B cell (primary cell): ENCODE measurements at regions of chr5 and their contacts with region 1.

Region 1: GRCh38 chr5:158695595-158696330 is 404.0 kb downstream of the EBF1 start:
- DNase-seq: peak; percentile 89
- ATAC-seq: peak; percentile 95
- H3K4me3 ChIP-seq: no peak overlapping the region
- H3K4me3 Mint-ChIP-seq: peak overlapping the region; percentile 35
- H3K27ac ChIP-seq: peak overlapping the region in 1 of 2 donors; percentile 53
- H3K27ac Mint-ChIP-seq: peak overlapping the region; percentile 28
- H3K4me1 ChIP-seq: peaks cover 17% of the 10 kb centered on the region in 2 donors
- H3K4me1 Mint-ChIP-seq: peaks cover 25% of the 10 kb centered on the region
- H3K27me3 ChIP-seq: no peaks in the 10 kb centered on the region
- H3K27me3 Mint-ChIP-seq: no peaks in the 10 kb centered on the region
- CTCF ChIP-seq: peak; percentile 99

Region 2: DNA sequence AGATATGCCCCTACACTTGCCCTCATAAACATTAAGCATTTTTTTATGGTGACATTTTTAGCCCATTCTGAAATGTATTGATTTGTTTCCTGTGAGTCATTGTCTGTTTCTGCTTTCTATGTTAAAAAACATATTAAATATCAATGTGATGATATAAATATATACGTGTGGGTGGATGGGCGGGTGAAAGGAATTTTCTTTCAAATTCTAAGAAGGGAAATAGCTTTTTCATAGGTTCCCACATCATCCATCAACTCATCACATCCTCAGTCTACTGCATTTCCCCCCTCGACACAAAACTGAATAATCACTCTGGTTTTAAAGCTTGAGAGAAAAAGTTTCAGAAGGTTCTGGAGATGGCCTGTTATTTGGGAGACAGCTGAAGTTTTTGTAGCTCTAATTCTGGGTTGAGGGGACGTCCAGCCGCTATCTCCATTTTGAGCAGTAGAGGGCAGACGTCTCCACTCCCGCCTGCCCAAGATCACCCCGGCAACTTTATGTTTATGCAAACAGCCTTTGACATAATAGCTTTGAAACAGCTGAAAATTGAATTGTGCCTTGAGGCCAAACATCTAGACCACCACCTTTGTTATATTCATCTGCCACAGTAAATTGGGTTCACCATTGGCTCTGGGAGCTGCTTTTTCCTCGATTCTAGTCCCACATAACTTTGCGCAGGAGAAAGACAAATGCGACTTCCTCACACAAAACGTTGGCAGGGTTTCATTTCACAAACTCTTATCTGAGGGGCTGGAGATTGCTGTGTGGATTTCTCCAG is 620.6 kb before region 1 on chr5:
- CTCF ChIA-PET with region 1: interaction called, 35 read pairs
- POLR2A ChIA-PET with region 1: no interaction called
- intact Hi-C with region 1: loop called (anchors 1 kb)
- DNase-seq: peak; percentile 78
- ATAC-seq: peak; percentile 90
- H3K4me3 ChIP-seq: peak overlapping the region in 2 of 5 experiments; percentile 10 to 20
- H3K4me3 Mint-ChIP-seq: peak overlapping the region; percentile 12
- H3K27ac ChIP-seq: no peak overlapping the region
- H3K27ac Mint-ChIP-seq: peak overlapping the region; percentile 43
- H3K4me1 ChIP-seq: peaks cover 12 to 20% of the 10 kb centered on the region in 2 donors
- H3K4me1 Mint-ChIP-seq: peaks cover 21% of the 10 kb centered on the region
- H3K27me3 ChIP-seq: peaks cover 0 to 3% (median 0%) of the 10 kb centered on the region in 4 experiments
- H3K27me3 Mint-ChIP-seq: no peaks in the 10 kb centered on the region
- CTCF ChIP-seq: peak; percentile 82

Region 3: GRCh38 chr5:158648631-158649030 is 47.1 kb before region 1 on chr5:
- CTCF ChIA-PET with region 1: no interaction called
- POLR2A ChIA-PET with region 1: no interaction called
- intact Hi-C with region 1: no loop called
- DNase-seq: no peak
- ATAC-seq: no peak
- H3K4me3 ChIP-seq: no peak overlapping the region
- H3K4me3 Mint-ChIP-seq: no peak overlapping the region
- H3K27ac ChIP-seq: no peak overlapping the region
- H3K27ac Mint-ChIP-seq: no peak overlapping the region
- H3K4me1 ChIP-seq: no peaks in the 10 kb centered on the region
- H3K4me1 Mint-ChIP-seq: peaks cover 4% of the 10 kb centered on the region
- H3K27me3 ChIP-seq: no peaks in the 10 kb centered on the region
- H3K27me3 Mint-ChIP-seq: peaks cover 4% of the 10 kb centered on the region
- CTCF ChIP-seq: no peak

Region 4: DNA sequence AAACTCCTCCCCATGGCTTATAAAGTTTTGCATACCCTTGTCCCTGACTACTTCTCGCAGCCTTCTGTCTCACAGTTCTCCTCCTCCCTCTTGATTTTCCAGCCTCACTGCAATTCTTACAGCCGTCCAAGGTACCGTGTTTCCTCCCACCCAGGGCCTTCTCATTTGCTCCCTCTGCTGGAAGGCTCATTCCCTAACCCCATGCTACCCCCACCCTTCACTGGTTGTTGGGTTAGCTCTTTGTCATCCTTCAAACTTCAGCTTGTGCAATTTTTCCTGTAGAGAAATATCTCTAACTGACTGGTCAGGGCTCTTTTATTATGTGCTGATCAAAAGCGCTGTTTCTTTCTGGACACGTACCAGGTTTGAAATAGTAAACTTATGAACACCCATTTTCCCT is 74.7 kb after region 1 on chr5:
- CTCF ChIA-PET with region 1: interaction called, 10 read pairs
- POLR2A ChIA-PET with region 1: no interaction called
- intact Hi-C with region 1: no loop called
- DNase-seq: peak; percentile 34
- ATAC-seq: no peak
- H3K4me3 ChIP-seq: peak overlapping the region in 1 of 5 experiments; percentile 4
- H3K4me3 Mint-ChIP-seq: peak overlapping the region; percentile 29
- H3K27ac ChIP-seq: peak overlapping the region in 1 of 2 donors; percentile 15
- H3K27ac Mint-ChIP-seq: peak overlapping the region; percentile 12
- H3K4me1 ChIP-seq: peaks cover 71 to 79% of the 10 kb centered on the region in 2 donors
- H3K4me1 Mint-ChIP-seq: peaks cover 89% of the 10 kb centered on the region
- H3K27me3 ChIP-seq: no peaks in the 10 kb centered on the region
- H3K27me3 Mint-ChIP-seq: no peaks in the 10 kb centered on the region
- CTCF ChIP-seq: no peak

Region 5: GRCh38 chr5:158819840-158820620 is 124.3 kb after region 1 on chr5:
- CTCF ChIA-PET with region 1: interaction called, 10 read pairs
- POLR2A ChIA-PET with region 1: no interaction called
- intact Hi-C with region 1: no loop called
- DNase-seq: peak; percentile 55
- ATAC-seq: peak; percentile 56
- H3K4me3 ChIP-seq: peak overlapping the region; percentile 2 to 50 (median 19)
- H3K4me3 Mint-ChIP-seq: peak overlapping the region; percentile 82
- H3K27ac ChIP-seq: peak overlapping the region; percentile 82 to 87
- H3K27ac Mint-ChIP-seq: peak overlapping the region; percentile 80
- H3K4me1 ChIP-seq: peaks cover 98 to 99% of the 10 kb centered on the region in 2 donors
- H3K4me1 Mint-ChIP-seq: peaks cover 97% of the 10 kb centered on the region
- H3K27me3 ChIP-seq: no peaks in the 10 kb centered on the region
- H3K27me3 Mint-ChIP-seq: no peaks in the 10 kb centered on the region
- CTCF ChIP-seq: no peak

Region 6: DNA sequence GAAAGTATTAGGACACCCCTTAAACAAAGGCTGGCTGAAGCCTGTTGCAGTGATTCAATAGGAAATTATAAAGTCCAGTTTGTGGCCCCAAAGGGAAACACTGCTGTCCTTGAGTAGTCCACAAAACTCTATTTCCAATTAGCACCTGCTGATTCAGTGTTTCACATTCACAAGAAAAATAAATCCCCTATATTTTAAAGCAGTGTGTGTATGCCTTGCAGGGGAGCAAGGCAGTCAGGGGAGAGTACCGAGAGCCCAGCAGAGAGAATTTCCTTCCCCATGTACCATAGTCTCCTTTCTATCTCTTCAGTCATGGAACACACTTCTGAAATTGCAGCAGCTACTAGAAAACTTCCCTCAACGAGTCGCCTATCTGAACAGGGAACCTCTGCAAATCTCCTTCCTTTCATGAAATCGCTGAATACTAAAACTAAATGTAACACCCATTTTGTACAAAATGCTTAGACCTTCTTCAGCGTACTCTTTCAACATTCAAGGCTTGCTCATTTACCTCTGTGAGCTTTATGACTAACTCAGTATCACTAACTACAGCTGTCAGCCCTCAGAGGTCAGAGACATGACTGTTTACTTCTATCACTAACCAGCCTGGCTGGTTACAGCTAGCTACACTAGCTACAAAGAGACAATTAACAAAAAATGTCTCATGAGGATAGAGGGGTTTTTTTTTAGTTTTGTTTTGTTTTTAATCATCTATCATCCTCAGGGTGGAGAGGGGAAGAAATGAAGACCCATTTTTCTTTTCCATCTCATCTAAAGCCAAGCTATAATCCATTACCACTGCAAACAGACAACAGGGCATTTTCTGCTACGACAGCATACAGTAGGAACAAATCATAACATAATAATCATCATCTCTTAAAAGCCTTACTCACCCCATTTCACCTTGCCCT is 215.3 kb after region 1 on chr5:
- CTCF ChIA-PET with region 1: no interaction called
- POLR2A ChIA-PET with region 1: no interaction called
- intact Hi-C with region 1: no loop called
- DNase-seq: peak; percentile 32
- ATAC-seq: peak; percentile 60
- H3K4me3 ChIP-seq: no peak overlapping the region
- H3K4me3 Mint-ChIP-seq: peak overlapping the region; percentile 60
- H3K27ac ChIP-seq: peak overlapping the region in 1 of 2 donors; percentile 55
- H3K27ac Mint-ChIP-seq: peak overlapping the region; percentile 46
- H3K4me1 ChIP-seq: peaks cover 35 to 45% of the 10 kb centered on the region in 2 donors
- H3K4me1 Mint-ChIP-seq: peaks cover 92% of the 10 kb centered on the region
- H3K27me3 ChIP-seq: no peaks in the 10 kb centered on the region
- H3K27me3 Mint-ChIP-seq: no peaks in the 10 kb centered on the region
- CTCF ChIP-seq: no peak

Region 7: DNA sequence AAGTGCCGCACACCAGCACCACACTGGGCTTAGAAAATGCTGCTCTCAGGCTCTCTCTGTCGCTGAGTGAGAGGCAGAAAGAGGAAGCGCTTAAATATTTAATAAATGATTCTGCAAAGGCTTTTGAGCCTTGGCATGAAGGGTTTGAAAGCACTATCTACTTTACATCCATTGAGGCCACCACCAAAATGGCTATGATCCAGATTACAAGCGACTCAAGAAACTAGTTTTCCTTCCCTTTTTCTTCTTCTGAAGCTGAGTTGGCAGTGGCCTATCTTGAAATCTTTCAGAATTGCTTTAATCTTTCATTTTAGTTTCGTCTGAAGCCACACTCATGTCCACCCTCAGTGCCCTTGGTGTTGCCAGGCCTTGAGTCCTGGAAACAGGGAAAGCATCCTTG is 344.4 kb after region 1 on chr5:
- CTCF ChIA-PET with region 1: interaction called, 10 read pairs
- POLR2A ChIA-PET with region 1: no interaction called
- intact Hi-C with region 1: no loop called
- DNase-seq: peak; percentile 69
- ATAC-seq: peak; percentile 78
- H3K4me3 ChIP-seq: peak overlapping the region in 2 of 5 experiments; percentile 4 to 34
- H3K4me3 Mint-ChIP-seq: peak overlapping the region; percentile 81
- H3K27ac ChIP-seq: peak overlapping the region; percentile 65 to 75
- H3K27ac Mint-ChIP-seq: peak overlapping the region; percentile 93
- H3K4me1 ChIP-seq: peaks cover 48 to 50% of the 10 kb centered on the region in 2 donors
- H3K4me1 Mint-ChIP-seq: peaks cover 71% of the 10 kb centered on the region
- H3K27me3 ChIP-seq: no peaks in the 10 kb centered on the region
- H3K27me3 Mint-ChIP-seq: no peaks in the 10 kb centered on the region
- CTCF ChIP-seq: no peak

Region 8: GRCh38 chr5:159094745-159095144 is 399.0 kb after region 1 on chr5:
- CTCF ChIA-PET with region 1: interaction called, 443 read pairs
- POLR2A ChIA-PET with region 1: interaction called, 4 read pairs
- intact Hi-C with region 1: no loop called
- DNase-seq: peak; percentile 73
- ATAC-seq: no peak
- H3K4me3 ChIP-seq: peak overlapping the region in 3 of 5 experiments; percentile 7 to 18 (median 13)
- H3K4me3 Mint-ChIP-seq: peak overlapping the region; percentile 100
- H3K27ac ChIP-seq: peak overlapping the region in 1 of 2 donors; percentile 18
- H3K27ac Mint-ChIP-seq: peak overlapping the region; percentile 93
- H3K4me1 ChIP-seq: peaks cover 28 to 30% of the 10 kb centered on the region in 2 donors
- H3K4me1 Mint-ChIP-seq: peaks cover 64% of the 10 kb centered on the region
- H3K27me3 ChIP-seq: no peaks in the 10 kb centered on the region
- H3K27me3 Mint-ChIP-seq: no peaks in the 10 kb centered on the region
- CTCF ChIP-seq: no peak

Region 9: GRCh38 chr5:159133041-159133741 is 437.4 kb after region 1 on chr5:
- CTCF ChIA-PET with region 1: interaction called, 25 read pairs
- POLR2A ChIA-PET with region 1: no interaction called
- intact Hi-C with region 1: loop called (anchors 1 kb)
- DNase-seq: peak; percentile 71
- ATAC-seq: peak; percentile 58
- H3K4me3 ChIP-seq: no peak overlapping the region
- H3K4me3 Mint-ChIP-seq: no peak overlapping the region
- H3K27ac ChIP-seq: no peak overlapping the region
- H3K27ac Mint-ChIP-seq: no peak overlapping the region
- H3K4me1 ChIP-seq: no peaks in the 10 kb centered on the region
- H3K4me1 Mint-ChIP-seq: no peaks in the 10 kb centered on the region
- H3K27me3 ChIP-seq: no peaks in the 10 kb centered on the region
- H3K27me3 Mint-ChIP-seq: peaks cover 13% of the 10 kb centered on the region
- CTCF ChIP-seq: peak; percentile 91